ENCODE measurements at regions of chr17 and their contacts with region 1.

Region 1: GRCh38 chr17:66704858-66705520 is 129.9 kb upstream of the CACNG5 start:
- DNase-seq: no peak
- ATAC-seq: no peak
- H3K4me3 ChIP-seq: no peak overlapping the region
- H3K4me3 Mint-ChIP-seq: no peak overlapping the region
- H3K27ac ChIP-seq: no peak overlapping the region
- H3K27ac Mint-ChIP-seq: peak overlapping the region; percentile 54 to 67
- H3K4me1 ChIP-seq: no peaks in the 10 kb centered on the region
- H3K4me1 Mint-ChIP-seq: peaks cover 0 to 18% (median 9%) of the 10 kb centered on the region in 3 donors
- H3K27me3 ChIP-seq: no peaks in the 10 kb centered on the region
- H3K27me3 Mint-ChIP-seq: no peaks in the 10 kb centered on the region

Region 2: DNA sequence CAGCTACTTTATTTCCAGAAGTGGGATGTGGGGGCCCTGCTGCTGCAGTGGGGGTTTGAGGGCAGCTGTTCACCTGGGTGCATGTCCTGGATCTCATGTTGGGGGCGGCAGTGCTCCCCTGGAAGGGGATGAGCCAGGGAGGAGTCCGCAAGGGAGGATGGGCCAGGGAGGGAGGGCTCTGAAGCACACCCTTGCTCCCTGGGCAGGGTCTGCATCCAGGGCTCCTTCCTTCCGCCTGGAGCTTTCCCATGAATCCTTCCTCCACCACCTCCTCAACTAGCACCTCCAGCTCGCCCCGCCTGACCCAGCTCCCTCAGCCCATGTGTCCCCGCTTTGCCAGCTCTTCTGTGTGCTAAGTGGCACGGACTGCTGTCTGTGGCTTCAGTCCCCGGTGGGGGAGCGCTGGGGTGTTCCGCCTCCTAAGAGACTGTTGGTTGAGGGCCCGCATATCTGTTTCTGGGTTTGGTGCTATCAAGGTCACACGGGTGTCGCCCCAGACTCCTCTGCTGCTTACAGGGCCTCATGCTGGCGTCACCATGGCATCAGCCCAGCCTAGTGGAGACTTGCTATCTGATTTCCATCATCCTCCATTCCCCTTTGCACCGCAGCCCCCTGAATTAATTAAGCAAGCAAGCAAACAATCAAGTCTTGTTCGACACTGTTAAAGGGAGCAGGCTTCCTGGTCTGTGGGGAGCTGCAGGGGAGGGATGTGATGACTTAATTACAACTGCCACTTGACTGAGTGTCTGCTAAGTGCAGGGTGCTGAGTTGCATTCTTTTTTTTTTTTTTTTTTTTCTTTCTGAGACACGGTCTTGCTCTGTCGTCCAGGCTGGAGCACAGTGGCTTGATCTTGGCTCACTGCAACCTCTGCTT is 330.8 kb before region 1 on chr17:
- CTCF ChIA-PET with region 1: interaction called in 1 of 2 experiments, 10 read pairs
- POLR2A ChIA-PET with region 1: no interaction called
- DNase-seq: peak; percentile 10 to 82 (median 64)
- ATAC-seq: peak; percentile 89 to 96 (median 94)
- H3K4me3 ChIP-seq: no peak overlapping the region
- H3K4me3 Mint-ChIP-seq: peak overlapping the region in 2 of 3 donors; percentile 7 to 45
- H3K27ac ChIP-seq: peak overlapping the region; percentile 21
- H3K27ac Mint-ChIP-seq: peak overlapping the region; percentile 85 to 86
- H3K4me1 ChIP-seq: peaks cover 3 to 14% of the 10 kb centered on the region in 2 experiments
- H3K4me1 Mint-ChIP-seq: peaks cover 69 to 77% (median 71%) of the 10 kb centered on the region in 3 donors
- H3K27me3 ChIP-seq: no peaks in the 10 kb centered on the region
- H3K27me3 Mint-ChIP-seq: no peaks in the 10 kb centered on the region

Measured in T-cell (primary cell).